GM12878 (cell line): ENCODE measurements at regions of chr20 and their contacts with region 1.

Region 1: GRCh38 chr20:53594068-53595017 is 704 bp upstream of the ZNF217 start:
- DNase-seq: no peak
- ATAC-seq: peak; percentile 77
- H3K4me3 ChIP-seq: peak overlapping the region; percentile 81
- H3K27ac ChIP-seq: peak overlapping the region; percentile 84
- H3K4me1 ChIP-seq: peaks cover 8% of the 10 kb centered on the region; the same call in 1 of the 2 replicates
- H3K27me3 ChIP-seq: no peaks in the 10 kb centered on the region
- CTCF ChIP-seq: peak; percentile 7 to 53 (median 40); a peak in 3 of 6 replicates
- EP300 ChIP-seq: no peak
- POLR2A ChIP-seq: peak; percentile 36; the same call in 1 of the 2 replicates
- RAD21 ChIP-seq: peak; percentile 40

Region 2: DNA sequence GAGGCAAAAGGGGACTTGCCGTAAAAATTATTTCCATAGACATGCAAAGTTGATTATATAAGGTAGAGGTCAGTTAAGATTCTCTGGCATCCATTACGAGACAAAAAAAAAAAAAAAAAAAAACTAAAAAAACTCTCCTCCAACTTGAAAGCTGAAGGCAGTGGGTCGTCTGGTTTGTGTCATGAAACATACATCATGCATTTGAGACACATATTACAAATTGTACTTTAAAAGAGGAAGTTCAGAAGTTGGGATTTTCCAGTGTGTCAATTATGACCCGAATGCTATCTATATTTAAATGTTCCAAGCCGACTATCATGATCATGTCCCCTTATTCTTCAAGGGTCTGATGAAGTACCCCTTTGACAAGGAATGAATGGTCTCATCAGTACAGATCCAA is 125.8 kb before region 1 on chr20:
- CTCF ChIA-PET with region 1: no interaction called
- POLR2A ChIA-PET with region 1: no interaction called
- RAD21 ChIA-PET with region 1: no interaction called
- SMC1A ChIA-PET with region 1: no interaction called
- in situ Hi-C with region 1: no loop called
- intact Hi-C with region 1: no loop called
- DNase-seq: peak; percentile 4
- ATAC-seq: peak; percentile 52; the same call in 2 of the 3 replicates
- H3K4me3 ChIP-seq: no peak overlapping the region
- H3K27ac ChIP-seq: no peak overlapping the region
- H3K4me1 ChIP-seq: no peaks in the 10 kb centered on the region
- H3K27me3 ChIP-seq: no peaks in the 10 kb centered on the region
- CTCF ChIP-seq: no peak
- EP300 ChIP-seq: no peak
- POLR2A ChIP-seq: no peak
- RAD21 ChIP-seq: no peak

Region 3: DNA sequence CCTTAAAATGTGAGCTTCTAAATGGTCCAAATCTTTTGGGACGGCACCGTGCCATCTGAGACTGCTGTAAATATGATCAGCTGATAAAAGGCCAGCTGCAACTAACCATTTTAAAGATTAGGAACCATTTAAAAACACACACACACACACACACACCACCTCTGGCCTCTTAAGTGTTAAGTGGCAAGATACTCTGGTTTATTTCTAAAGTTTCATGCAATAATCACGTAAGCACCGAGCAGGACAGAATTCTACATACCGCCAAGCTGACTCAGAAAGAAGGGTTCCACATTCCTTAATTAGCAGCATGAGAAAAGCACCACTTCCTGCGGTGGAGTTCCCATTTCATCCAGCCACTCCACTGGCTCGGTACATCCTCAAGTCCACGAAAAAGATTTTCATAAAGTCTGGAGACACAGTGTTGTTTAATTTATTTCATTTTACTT is 17.1 kb after region 1 on chr20:
- CTCF ChIA-PET with region 1: interaction called, 8 read pairs
- POLR2A ChIA-PET with region 1: interaction called, 11 read pairs
- RAD21 ChIA-PET with region 1: interaction called, 7 read pairs
- SMC1A ChIA-PET with region 1: interaction called, 15 read pairs
- in situ Hi-C with region 1: no loop called
- intact Hi-C with region 1: no loop called
- DNase-seq: peak; percentile 82
- ATAC-seq: peak; percentile 84
- H3K4me3 ChIP-seq: peak overlapping the region; percentile 15; the same call in 1 of the 2 replicates
- H3K27ac ChIP-seq: peak overlapping the region; percentile 87
- H3K4me1 ChIP-seq: peaks cover 15% of the 10 kb centered on the region
- H3K27me3 ChIP-seq: no peaks in the 10 kb centered on the region
- CTCF ChIP-seq: no peak
- EP300 ChIP-seq: peak; percentile 71 to 80; a peak in 3 of 4 replicates
- POLR2A ChIP-seq: no peak
- RAD21 ChIP-seq: no peak

Region 4: GRCh38 chr20:53636540-53637097 is 42.3 kb after region 1 on chr20:
- CTCF ChIA-PET with region 1: no interaction called
- POLR2A ChIA-PET with region 1: interaction called, 12 read pairs
- RAD21 ChIA-PET with region 1: interaction called, 6 read pairs
- SMC1A ChIA-PET with region 1: no interaction called
- in situ Hi-C with region 1: no loop called
- intact Hi-C with region 1: no loop called
- DNase-seq: no peak
- ATAC-seq: no peak
- H3K4me3 ChIP-seq: no peak overlapping the region
- H3K27ac ChIP-seq: no peak overlapping the region
- H3K4me1 ChIP-seq: peaks cover 5% of the 10 kb centered on the region; the same call in 1 of the 2 replicates
- H3K27me3 ChIP-seq: no peaks in the 10 kb centered on the region
- CTCF ChIP-seq: no peak
- EP300 ChIP-seq: no peak
- POLR2A ChIP-seq: no peak
- RAD21 ChIP-seq: no peak

Region 5: DNA sequence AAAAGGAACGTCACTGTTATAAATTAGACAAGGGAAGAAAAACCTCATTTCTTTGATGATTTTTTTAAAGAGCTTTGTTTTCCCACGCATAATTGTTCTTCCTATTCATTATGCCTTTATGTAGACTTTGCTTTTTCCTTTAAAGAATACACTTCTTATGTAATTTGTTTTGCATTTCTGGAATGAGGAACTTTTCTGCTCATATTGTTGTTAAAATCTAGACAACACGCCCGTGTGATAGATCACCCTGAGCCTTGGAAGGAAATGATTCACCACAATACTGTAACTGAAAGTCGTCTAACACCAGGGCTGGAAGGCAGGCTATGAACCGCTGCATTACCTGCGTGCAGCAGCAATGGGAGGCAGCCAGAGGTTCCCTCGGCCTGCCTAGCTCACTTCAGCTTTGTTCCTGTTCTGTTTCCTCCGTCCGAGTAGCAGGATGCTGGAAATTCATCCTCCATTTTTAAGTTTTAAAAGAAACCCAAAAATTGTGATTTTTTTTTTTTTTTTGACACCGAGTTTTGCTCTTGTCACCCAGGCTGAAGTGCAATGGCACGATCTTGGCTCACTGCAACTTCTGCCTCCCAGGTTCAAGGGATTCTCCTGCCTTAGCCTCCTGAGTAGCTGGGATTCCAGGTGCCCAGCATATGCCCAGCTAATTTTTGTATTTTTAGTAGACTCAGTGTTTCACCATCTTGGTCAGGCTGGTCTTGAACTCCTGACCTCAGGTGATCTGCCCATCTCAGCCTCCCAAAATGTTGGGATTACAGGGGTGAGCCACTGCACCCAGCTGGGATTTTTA is 48.9 kb after region 1 on chr20:
- CTCF ChIA-PET with region 1: interaction called, 3 read pairs
- POLR2A ChIA-PET with region 1: interaction called, 3 read pairs
- RAD21 ChIA-PET with region 1: interaction called, 11 read pairs
- SMC1A ChIA-PET with region 1: interaction called, 5 read pairs
- in situ Hi-C with region 1: no loop called
- intact Hi-C with region 1: no loop called
- DNase-seq: peak; percentile 92
- ATAC-seq: peak; percentile 99
- H3K4me3 ChIP-seq: peak overlapping the region; percentile 37
- H3K27ac ChIP-seq: peak overlapping the region; percentile 88
- H3K4me1 ChIP-seq: peaks cover 15% of the 10 kb centered on the region
- H3K27me3 ChIP-seq: no peaks in the 10 kb centered on the region
- CTCF ChIP-seq: 0 out of 6 replicates have a peak, but pooled peaks of 1 of the 3 experiments have one; percentile 7
- EP300 ChIP-seq: peak; percentile 18 to 87; a peak in 3 of 4 replicates
- POLR2A ChIP-seq: peak; percentile 83
- RAD21 ChIP-seq: 0 out of 2 replicates have a peak, but pooled peaks have one; percentile 13

Region 6: GRCh38 chr20:53652090-53652858 is 57.9 kb after region 1 on chr20:
- CTCF ChIA-PET with region 1: no interaction called
- POLR2A ChIA-PET with region 1: interaction called, 5 read pairs
- RAD21 ChIA-PET with region 1: interaction called, 11 read pairs
- SMC1A ChIA-PET with region 1: interaction called, 4 read pairs
- in situ Hi-C with region 1: no loop called
- intact Hi-C with region 1: loop called (anchors 2 kb)
- DNase-seq: peak; percentile 93
- ATAC-seq: peak; percentile 76
- H3K4me3 ChIP-seq: peak overlapping the region; percentile 30; the same call in 1 of the 2 replicates
- H3K27ac ChIP-seq: peak overlapping the region; percentile 99
- H3K4me1 ChIP-seq: peaks cover 39% of the 10 kb centered on the region
- H3K27me3 ChIP-seq: no peaks in the 10 kb centered on the region
- CTCF ChIP-seq: no peak
- EP300 ChIP-seq: peak; percentile 68 to 72; a peak in 2 of 4 replicates
- POLR2A ChIP-seq: no peak
- RAD21 ChIP-seq: peak; percentile 17; the same call in 1 of the 2 replicates